Breast epithelium (tissue), 4 donors: ENCODE measurements at regions of chr20 and their contacts with region 1.

Region 1: DNA sequence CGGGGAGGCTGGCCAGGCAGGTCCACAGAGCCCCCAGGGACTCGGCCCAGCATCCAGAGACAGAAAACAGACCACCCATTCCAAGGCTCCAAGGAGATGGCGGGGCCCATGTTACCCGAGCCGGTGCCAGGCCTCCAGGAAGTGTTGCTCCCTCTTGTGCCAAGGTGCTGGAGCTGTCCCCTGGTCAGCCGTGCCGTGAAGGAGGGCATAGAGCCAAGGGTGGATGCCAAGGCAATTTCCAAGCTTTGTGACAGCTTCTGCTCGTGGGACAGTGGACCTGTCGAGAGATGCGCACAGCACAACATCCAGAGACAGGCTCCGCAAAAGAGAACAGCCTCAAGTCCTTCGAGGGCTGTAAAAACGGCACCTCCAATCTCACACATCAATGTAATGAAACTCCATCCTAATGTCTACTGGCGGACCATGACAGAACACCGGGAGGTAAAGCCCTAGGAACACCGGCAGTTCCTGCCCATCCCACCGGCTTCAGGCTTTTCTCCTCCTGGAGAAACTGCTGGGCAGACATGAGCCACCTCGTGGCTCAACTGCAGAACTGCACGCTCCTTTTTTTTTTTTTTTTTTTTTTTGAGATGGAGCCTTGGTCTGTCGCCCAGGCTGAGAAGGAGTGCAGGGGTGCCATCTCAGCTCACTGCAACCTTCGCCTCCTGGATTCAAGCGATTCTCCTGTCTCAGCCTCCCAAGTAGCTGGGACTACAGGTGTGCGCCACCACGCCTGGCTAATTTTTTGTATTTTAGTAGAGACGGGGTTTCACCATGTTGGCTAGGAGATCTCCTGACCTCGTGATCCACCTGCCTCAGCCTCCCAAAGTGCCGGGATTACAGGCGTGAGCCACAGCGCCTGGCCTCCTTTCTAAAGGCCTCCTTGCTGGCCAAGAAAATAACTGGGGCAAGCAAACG is 30.9 kb upstream of the AVP start:
- DNase-seq: no peak
- H3K4me3 ChIP-seq: no peak overlapping the region
- H3K27ac ChIP-seq: no peak overlapping the region
- H3K4me1 ChIP-seq: no peaks in the 10 kb centered on the region
- H3K27me3 ChIP-seq: no peaks in the 10 kb centered on the region
- CTCF ChIP-seq: peak in 2 of 3 donors; percentile 48 to 55
- POLR2A ChIP-seq: no peak

Region 2: DNA sequence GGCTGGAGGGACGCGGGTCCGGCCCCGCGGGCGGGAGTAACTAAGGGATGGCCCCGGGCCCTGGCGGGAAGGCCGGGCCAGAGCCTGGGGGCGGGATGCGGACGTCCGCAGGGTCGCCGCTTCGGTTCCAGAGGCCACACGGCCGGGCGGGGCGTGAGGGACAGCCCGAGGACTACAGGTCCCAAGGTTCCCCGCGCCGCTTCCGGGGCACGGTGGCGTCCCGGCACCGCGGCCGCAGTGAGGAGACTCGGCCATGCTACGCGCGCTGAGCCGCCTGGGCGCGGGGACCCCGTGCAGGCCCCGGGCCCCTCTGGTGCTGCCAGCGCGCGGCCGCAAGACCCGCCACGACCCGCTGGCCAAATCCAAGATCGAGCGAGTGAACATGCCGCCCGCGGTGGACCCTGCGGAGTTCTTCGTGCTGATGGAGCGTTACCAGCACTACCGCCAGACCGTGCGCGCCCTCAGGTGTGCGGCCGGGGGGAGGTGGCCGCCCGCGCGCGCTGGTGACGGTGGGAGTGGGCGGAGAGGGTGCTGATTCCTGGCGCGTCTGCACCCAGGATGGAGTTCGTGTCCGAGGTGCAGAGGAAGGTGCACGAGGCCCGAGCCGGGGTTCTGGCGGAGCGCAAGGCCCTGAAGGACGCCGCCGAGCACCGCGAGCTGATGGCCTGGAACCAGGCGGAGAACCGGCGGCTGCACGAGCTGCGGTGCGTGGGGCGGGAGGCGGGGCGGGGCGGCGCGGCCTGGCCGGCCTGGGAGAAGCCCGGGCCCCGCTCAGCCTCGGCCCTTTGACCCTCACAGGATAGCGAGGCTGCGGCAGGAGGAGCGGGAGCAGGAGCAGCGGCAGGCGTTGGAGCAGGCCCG is 69.4 kb before region 1 on chr20 and contains the start of gene MRPS26:
- intact Hi-C with region 1: loop called (anchors 5 kb)
- DNase-seq: peak; percentile 77 to 85
- H3K4me3 ChIP-seq: peak within 1 kb of the TSS; percentile 82 to 91 (median 88)
- H3K27ac ChIP-seq: peak within 1 kb of the TSS; percentile 93 to 94
- H3K4me1 ChIP-seq: peaks cover 4 to 5% of the 10 kb centered on the region in 2 donors
- H3K27me3 ChIP-seq: no peaks in the 10 kb centered on the region
- CTCF ChIP-seq: no peak
- POLR2A ChIP-seq: peak; percentile 25
- total RNA-seq, gene MRPS26: 34.4 to 50.8 (median 44.9) TPM

Region 3: DNA sequence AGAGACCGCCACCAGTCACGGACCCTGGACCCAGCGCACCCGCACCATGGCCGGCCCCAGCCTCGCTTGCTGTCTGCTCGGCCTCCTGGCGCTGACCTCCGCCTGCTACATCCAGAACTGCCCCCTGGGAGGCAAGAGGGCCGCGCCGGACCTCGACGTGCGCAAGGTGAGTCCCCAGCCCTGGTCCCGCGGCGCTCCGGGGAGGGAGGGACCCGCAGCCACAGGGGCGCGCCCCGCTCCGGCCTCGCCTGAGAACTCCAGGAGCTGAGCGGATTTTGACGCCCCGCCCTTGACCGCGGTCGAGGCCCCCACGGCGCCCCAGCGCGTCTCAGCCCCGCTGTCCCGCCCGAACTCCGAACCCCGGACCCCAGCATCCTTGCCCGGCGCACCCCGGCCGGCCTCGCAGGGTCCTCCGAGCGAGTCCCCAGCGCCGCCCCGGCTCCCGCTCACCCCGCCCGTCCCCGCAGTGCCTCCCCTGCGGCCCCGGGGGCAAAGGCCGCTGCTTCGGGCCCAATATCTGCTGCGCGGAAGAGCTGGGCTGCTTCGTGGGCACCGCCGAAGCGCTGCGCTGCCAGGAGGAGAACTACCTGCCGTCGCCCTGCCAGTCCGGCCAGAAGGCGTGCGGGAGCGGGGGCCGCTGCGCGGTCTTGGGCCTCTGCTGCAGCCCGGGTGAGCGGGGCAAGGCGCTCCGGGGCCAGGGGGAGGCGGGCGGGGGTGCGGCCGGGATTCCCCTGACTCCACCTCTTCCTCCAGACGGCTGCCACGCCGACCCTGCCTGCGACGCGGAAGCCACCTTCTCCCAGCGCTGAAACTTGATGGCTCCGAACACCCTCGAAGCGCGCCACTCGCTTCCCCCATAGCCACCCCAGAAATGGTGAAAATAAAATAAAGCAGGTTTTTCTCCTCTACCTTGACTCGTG is 43.6 kb before region 1 on chr20 and contains the start of gene OXT:
- intact Hi-C with region 1: no loop called
- DNase-seq: no peak
- H3K4me3 ChIP-seq: peak within 1 kb of the TSS; percentile 58 to 88 (median 67)
- H3K27ac ChIP-seq: peak within 1 kb of the TSS in 1 of 2 donors; percentile 43
- H3K4me1 ChIP-seq: peaks cover 0 to 7% of the 10 kb centered on the region in 2 donors
- H3K27me3 ChIP-seq: no peaks in the 10 kb centered on the region
- CTCF ChIP-seq: no peak
- POLR2A ChIP-seq: no peak
- total RNA-seq, gene OXT: 4.5 TPM in 1 of 3 donors, not detected in the others